OCI-LY7 (cell line): ENCODE measurements at regions of chr19 and their contacts with region 1.

Region 1: GRCh38 chr19:18304458-18305310 is 18.2 kb downstream of the LSM4 start:
- DNase-seq: peak; percentile 83
- H3K4me3 ChIP-seq: peak overlapping the region; percentile 65
- H3K27ac ChIP-seq: peak overlapping the region; percentile 94
- H3K4me1 ChIP-seq: peaks cover 54% of the 10 kb centered on the region
- CTCF ChIP-seq: peak; percentile 26; the same call in 1 of the 2 replicates

Region 2: GRCh38 chr19:18291590-18292461 is 12.9 kb before region 1 on chr19:
- CTCF ChIA-PET with region 1: interaction called, 6 read pairs
- POLR2A ChIA-PET with region 1: interaction called, 9 read pairs
- intact Hi-C with region 1: loop called (anchors 1 kb)
- DNase-seq: peak; percentile 81
- H3K4me3 ChIP-seq: peak overlapping the region; percentile 73
- H3K27ac ChIP-seq: peak overlapping the region; percentile 59
- H3K4me1 ChIP-seq: peaks cover 57% of the 10 kb centered on the region
- CTCF ChIP-seq: no peak

Region 3: DNA sequence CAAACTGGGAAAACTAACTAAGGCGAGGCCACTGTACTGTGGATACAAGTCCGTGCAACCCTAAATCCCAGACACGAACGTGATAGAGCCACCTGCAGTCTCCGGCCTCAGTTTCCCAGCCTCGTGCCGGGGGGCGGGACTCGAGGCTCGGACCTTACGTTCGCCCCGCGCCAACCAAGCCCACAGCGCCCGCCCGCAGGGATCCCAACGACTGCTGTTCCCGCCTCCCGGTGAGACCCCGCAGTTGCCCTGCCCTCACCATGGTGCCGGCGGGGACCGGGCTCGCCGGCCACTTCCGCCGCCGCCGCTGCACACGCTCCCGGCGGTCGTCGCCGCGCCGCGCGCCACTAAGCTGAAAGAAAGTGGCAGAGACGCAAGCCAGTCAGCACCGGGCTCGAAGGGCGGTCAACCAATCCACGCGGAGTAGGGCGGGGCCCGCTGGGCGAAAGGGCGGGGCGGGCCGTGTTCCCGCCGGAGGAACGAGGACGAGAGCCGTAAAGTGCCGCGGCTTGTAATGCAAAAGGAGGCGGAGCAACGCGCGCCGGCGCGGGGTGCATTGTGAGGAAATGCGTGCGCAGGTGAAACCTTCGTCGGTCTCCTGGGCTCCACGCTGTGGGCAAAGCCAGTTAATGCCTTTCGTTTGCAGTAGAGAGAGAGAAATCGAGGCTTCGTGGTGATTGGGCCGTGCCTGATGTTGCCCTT is 18.2 kb after region 1 on chr19 and contains the start of gene LSM4:
- CTCF ChIA-PET with region 1: interaction called, 3 read pairs
- POLR2A ChIA-PET with region 1: interaction called, 11 read pairs
- intact Hi-C with region 1: loop called (anchors 1 kb)
- DNase-seq: peak; percentile 100
- H3K4me3 ChIP-seq: peak within 1 kb of the TSS; percentile 89
- H3K27ac ChIP-seq: peak within 1 kb of the TSS; percentile 90
- H3K4me1 ChIP-seq: peaks cover 46% of the 10 kb centered on the region
- CTCF ChIP-seq: peak; percentile 65
- total RNA-seq, gene LSM4: 451 and 482 TPM in 2 replicates

Region 4: GRCh38 chr19:18349524-18350128 is 44.9 kb after region 1 on chr19:
- CTCF ChIA-PET with region 1: no interaction called
- POLR2A ChIA-PET with region 1: no interaction called
- intact Hi-C with region 1: no loop called
- DNase-seq: peak; percentile 40
- H3K4me3 ChIP-seq: no peak overlapping the region
- H3K27ac ChIP-seq: no peak overlapping the region
- H3K4me1 ChIP-seq: no peaks in the 10 kb centered on the region
- CTCF ChIP-seq: peak; percentile 82

Region 5: GRCh38 chr19:18401580-18402112 is 97.0 kb after region 1 on chr19:
- CTCF ChIA-PET with region 1: interaction called, 27 read pairs
- POLR2A ChIA-PET with region 1: no interaction called
- intact Hi-C with region 1: no loop called
- DNase-seq: peak; percentile 96
- H3K4me3 ChIP-seq: peak overlapping the region; percentile 56
- H3K27ac ChIP-seq: peak overlapping the region; percentile 75
- H3K4me1 ChIP-seq: peaks cover 58% of the 10 kb centered on the region
- CTCF ChIP-seq: peak; percentile 78